Vagina (tissue), 2 donors: ENCODE measurements at regions of chr14 and their contacts with region 1.

Region 1: DNA sequence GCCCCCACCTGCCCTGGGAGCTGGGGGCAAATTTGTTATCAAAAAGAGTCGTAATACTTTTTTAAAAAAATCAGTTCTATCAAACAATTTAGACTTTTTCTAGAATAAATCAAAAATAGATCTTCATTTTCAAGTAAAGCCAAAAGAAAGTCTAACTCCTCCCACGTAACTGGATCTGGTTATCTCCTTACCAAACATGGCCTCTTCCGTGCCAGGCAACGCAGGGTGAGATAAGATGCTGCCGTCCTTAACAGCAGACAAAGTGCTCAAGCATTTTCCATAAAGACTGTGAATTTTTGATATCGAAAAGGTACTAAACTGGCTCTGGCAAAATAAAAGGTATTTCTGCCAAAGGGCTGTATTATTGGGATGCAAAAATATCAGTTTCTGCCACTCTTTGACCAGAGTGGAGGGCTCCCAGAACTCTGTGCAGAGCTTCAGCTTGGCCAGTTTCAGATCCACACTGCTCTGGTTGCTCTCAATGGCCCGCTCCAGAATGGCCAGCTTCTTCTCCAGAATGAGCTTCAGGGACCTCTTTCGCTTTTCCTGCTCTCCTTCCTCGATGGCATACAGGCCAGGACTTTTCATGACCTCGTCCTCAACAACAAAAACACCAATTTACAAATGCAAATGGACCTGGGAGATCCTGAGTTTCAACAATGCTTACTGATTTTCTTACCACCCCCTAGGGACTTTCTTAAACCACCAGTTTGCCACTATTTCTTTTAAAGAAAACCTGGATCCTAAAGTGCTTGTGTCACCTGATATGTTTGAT is 29.0 kb downstream of the NRDE2 start:
- DNase-seq: no peak
- H3K4me3 ChIP-seq: no peak overlapping the region
- H3K27ac ChIP-seq: no peak overlapping the region
- H3K4me1 ChIP-seq: peaks cover 7% of the 10 kb centered on the region
- H3K27me3 ChIP-seq: no peaks in the 10 kb centered on the region
- CTCF ChIP-seq: no peak
- POLR2A ChIP-seq: no peak

Region 2: DNA sequence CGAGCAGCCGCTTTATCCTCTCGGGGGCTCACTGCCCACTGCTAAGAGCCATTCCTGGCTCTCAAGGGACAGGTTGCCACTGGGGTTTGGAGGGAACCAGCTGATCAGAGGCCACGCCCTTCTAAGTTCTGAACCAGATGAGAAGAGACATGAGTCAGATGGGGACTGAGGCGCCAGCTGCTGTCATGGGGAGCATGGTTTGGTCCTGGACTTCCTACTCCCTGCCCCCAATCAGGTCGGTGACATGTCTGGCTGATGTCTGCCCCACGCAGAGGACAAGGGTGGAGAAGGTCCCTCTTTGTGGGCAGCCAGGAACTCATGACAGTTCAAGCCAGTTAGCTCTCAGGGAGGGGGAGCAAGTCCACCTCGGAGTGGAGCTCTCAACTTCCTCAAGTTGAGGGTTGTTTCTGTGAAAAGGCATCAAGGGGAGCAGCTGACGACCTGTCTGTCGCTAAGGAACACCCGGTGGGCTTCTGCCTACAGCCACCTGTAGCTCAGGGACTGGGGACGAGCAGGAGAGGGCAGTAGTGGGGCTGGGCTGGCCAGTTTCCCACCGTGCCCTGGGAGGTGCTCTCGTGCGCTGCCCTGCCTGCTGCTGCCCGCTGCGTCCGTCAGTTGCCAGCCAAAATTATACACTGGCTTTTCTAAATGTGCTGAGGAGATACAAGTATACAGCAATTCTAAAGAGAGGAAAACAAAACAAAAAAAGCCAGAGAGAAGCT is 25.9 kb before region 1 on chr14:
- intact Hi-C with region 1: loop called (anchors 1 kb)
- DNase-seq: peak in 1 of 2 donors; percentile 37
- H3K4me3 ChIP-seq: no peak overlapping the region
- H3K27ac ChIP-seq: no peak overlapping the region
- H3K4me1 ChIP-seq: no peaks in the 10 kb centered on the region
- H3K27me3 ChIP-seq: no peaks in the 10 kb centered on the region
- CTCF ChIP-seq: no peak
- POLR2A ChIP-seq: no peak